A549 (cell line): ENCODE measurements at regions of chr17 and their contacts with region 1.

Region 1: DNA sequence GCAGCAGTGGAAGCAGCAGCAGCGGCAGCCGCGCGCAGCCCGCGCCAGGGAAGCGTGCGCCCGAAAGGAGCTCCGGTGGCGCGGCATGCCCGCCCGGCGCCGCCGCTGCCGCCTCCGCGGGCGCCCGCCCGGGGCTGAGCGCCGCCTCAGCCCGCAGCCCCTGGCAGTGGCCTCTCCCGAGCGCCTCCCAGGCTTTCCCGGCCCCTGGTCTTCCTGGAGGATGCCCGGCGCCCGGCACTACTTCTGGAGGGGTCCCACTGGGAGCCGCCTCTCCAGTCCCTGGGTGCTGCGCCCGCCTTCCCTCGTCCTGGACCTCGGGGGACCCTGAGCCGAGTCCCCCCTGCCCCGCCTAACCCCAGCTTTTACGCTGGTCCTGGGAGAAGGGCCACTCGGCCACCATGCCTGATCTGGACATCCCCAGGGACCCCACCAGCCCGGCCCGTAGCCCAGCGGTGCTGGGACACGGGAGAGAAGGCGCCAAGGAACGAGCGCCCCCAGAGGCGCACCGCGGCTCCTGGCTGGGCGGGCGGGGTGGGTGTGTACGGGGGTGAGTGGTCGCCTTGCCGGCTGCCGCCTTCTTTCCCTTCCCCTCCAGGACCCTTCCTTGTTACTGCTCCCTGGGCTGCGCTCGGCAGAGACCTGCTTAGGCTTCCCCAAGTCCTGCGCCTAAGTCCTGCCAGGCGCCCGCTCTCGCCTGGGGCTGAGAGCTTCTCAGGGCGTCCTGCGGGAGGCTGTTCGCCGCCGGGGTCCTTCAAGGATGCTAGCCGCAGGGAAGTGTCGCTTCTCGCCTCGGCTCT is 713 bp downstream of the ASIC2 start:
- DNase-seq: peak; percentile 53 to 67
- ATAC-seq: peak; percentile 75 to 84
- H3K4me3 ChIP-seq: peak overlapping the region; percentile 57
- H3K27ac ChIP-seq: peak overlapping the region; percentile 76 to 88
- H3K4me1 ChIP-seq: no peaks in the 10 kb centered on the region; the same call in 1 of the 3 replicates
- CTCF ChIP-seq: peak; percentile 64
- EP300 ChIP-seq: no peak
- POLR2A ChIP-seq: no peak
- RAD21 ChIP-seq: peak; percentile 44 to 70

Region 2: DNA sequence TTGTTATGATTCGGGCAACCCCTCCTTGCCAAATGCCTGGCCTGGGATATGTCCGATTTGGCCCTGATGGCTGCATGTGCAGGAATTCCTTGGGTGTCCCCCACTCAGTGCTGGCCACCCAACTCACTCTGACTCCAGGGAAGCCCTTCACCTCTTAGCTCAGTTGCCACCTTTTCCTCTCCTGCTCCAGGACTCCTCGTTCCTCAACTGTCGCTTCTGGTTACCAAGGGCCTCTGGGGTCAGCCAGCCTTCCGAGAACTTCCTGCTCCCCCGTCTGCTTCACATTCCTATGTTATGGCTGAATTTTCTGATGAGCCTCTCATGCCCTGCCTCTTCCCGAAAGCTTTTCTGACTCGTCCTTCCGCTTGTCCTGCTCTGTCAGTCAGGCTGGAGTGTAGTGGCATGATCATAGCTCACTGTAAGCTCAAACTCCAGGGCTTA is 237.2 kb before region 1 on chr17:
- CTCF ChIA-PET with region 1: interaction called, 20 read pairs
- POLR2A ChIA-PET with region 1: no interaction called
- DNase-seq: no peak
- ATAC-seq: no peak
- H3K4me3 ChIP-seq: no peak overlapping the region
- H3K27ac ChIP-seq: no peak overlapping the region
- H3K4me1 ChIP-seq: peaks cover 19% of the 10 kb centered on the region
- CTCF ChIP-seq: no peak
- EP300 ChIP-seq: no peak
- POLR2A ChIP-seq: no peak
- RAD21 ChIP-seq: no peak

Region 3: DNA sequence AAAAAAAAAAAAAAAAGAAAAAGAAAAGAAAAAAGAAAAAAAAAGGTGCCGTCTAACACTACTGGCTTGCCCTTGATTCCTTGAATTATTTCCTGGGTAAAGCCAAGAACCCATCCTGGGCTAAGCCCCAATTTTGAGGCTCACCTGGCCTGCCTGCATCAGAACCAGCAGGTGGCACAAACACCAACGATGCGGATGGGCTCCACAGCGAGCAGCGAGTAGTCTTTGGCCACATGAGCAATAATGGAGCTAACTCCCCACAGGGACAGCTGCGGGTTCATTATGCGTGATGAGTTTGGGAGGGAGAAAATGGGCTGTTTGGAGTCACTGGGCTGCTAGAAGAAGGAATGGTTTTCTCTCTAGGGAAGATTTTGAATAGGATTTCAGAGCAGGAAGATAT is 90.4 kb before region 1 on chr17:
- CTCF ChIA-PET with region 1: interaction called, 12 read pairs
- POLR2A ChIA-PET with region 1: no interaction called
- DNase-seq: no peak
- ATAC-seq: no peak
- H3K4me3 ChIP-seq: no peak overlapping the region
- H3K27ac ChIP-seq: no peak overlapping the region
- H3K4me1 ChIP-seq: peaks cover 11% of the 10 kb centered on the region
- CTCF ChIP-seq: no peak
- EP300 ChIP-seq: no peak
- POLR2A ChIP-seq: no peak
- RAD21 ChIP-seq: peak in 1 of 2 experiments; percentile 12; a peak in 1 of 5 replicates

Region 4: DNA sequence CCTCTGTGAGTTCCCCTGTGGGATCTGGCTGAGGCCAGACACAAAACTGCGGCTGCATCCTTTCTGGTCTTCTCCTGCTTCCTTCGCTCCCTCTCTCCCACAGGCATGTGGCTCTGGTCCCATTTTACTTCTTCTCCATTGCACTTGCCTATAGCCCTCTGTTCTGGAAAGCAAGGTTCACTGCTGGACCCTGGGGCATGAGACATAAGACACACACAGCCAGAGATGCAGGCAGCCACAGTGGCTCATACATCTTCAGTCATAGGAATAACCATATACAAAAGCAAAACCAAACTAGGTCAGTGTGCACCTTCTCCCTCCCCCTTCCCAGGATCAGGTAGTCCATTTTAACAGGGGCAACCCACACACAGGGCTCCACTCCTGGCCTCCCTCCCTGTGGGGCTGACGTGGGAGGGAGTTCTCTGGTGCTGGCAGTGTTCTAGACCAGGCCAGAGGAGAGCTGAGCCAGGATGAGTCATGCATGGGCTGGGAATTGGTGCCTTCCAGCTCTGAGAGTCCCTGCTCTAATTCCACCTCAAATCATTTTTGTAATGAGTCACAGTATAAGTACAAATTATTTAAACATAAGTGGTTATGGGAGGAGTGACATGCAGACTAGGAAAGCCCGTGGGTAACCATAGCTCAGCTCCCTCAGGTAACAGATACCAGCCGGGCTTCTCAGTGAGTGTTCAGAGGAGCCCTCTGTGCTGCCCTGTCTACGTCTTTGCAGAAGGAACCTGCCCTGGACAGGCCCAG is 57.3 kb before region 1 on chr17:
- CTCF ChIA-PET with region 1: interaction called, 17 read pairs
- POLR2A ChIA-PET with region 1: no interaction called
- DNase-seq: peak; percentile 66 to 79
- ATAC-seq: peak; percentile 95
- H3K4me3 ChIP-seq: no peak overlapping the region
- H3K27ac ChIP-seq: peak overlapping the region; percentile 41 to 70; a peak in 5 of 6 replicates
- H3K4me1 ChIP-seq: peaks cover 23% of the 10 kb centered on the region
- CTCF ChIP-seq: no peak
- EP300 ChIP-seq: no peak
- POLR2A ChIP-seq: no peak
- RAD21 ChIP-seq: 0 out of 5 replicates have a peak, but pooled peaks of 1 of the 2 experiments have one; percentile 12

Region 5: GRCh38 chr17:33267260-33267790 is 25.1 kb before region 1 on chr17:
- CTCF ChIA-PET with region 1: interaction called, 20 read pairs
- POLR2A ChIA-PET with region 1: no interaction called
- DNase-seq: peak; percentile 55 to 71
- ATAC-seq: peak; percentile 89 to 91
- H3K4me3 ChIP-seq: no peak overlapping the region
- H3K27ac ChIP-seq: peak overlapping the region; percentile 56 to 78
- H3K4me1 ChIP-seq: peaks cover 28% of the 10 kb centered on the region
- CTCF ChIP-seq: no peak
- EP300 ChIP-seq: peak in 1 of 2 experiments; percentile 72; a peak in 2 of 5 replicates
- POLR2A ChIP-seq: no peak
- RAD21 ChIP-seq: 0 out of 5 replicates have a peak, but pooled peaks of 1 of the 2 experiments have one; percentile 20

Region 6: DNA sequence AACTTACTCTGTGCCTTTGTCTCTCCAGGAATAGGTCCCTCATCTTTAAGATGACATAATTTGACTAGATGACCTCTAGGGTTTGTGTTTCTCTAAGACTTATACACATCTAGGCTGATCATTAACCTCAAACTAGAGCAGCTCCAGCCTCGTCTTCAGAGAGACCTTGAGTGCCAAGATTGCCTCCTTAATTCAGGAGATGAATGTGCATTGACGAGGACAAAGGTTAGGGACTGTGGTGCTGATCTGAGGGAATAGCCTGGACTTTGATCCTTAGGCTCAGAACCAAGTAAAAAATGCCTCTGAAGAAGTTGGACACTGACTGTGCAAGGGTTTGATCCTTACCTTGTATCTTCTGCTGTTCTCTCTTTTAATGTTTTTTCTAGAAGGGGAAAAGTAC is 17.9 kb after region 1 on chr17:
- CTCF ChIA-PET with region 1: interaction called, 34 read pairs
- POLR2A ChIA-PET with region 1: no interaction called
- DNase-seq: no peak
- ATAC-seq: no peak
- H3K4me3 ChIP-seq: no peak overlapping the region
- H3K27ac ChIP-seq: no peak overlapping the region
- H3K4me1 ChIP-seq: no peaks in the 10 kb centered on the region
- CTCF ChIP-seq: no peak
- EP300 ChIP-seq: no peak
- POLR2A ChIP-seq: no peak
- RAD21 ChIP-seq: no peak

Region 7: DNA sequence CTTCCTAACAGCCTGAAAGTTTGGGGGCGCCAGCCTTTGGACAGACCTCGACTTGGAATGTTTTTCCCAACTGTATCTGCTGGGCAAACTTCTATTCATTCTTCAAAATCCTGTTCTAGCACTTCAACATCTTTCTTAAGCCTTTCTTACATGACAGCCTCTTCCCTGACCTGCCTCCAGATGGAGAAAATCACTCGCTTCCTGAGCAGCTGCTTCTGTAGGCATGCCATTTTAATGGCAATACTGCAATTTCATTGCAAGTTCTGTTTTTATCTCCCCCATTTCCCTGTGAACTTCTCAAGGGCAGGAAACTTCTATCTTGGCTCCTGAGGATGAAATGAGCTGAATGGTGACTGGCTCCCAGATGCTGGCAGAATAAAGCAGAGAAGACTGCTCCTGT is 129.6 kb after region 1 on chr17:
- CTCF ChIA-PET with region 1: no interaction called
- POLR2A ChIA-PET with region 1: no interaction called
- DNase-seq: no peak
- ATAC-seq: no peak
- H3K4me3 ChIP-seq: no peak overlapping the region
- H3K27ac ChIP-seq: no peak overlapping the region
- H3K4me1 ChIP-seq: no peaks in the 10 kb centered on the region
- CTCF ChIP-seq: no peak
- EP300 ChIP-seq: no peak
- POLR2A ChIP-seq: no peak
- RAD21 ChIP-seq: no peak